OCI-LY7 (cell line): ENCODE measurements at regions of chr5 and their contacts with region 1.

Region 1: DNA sequence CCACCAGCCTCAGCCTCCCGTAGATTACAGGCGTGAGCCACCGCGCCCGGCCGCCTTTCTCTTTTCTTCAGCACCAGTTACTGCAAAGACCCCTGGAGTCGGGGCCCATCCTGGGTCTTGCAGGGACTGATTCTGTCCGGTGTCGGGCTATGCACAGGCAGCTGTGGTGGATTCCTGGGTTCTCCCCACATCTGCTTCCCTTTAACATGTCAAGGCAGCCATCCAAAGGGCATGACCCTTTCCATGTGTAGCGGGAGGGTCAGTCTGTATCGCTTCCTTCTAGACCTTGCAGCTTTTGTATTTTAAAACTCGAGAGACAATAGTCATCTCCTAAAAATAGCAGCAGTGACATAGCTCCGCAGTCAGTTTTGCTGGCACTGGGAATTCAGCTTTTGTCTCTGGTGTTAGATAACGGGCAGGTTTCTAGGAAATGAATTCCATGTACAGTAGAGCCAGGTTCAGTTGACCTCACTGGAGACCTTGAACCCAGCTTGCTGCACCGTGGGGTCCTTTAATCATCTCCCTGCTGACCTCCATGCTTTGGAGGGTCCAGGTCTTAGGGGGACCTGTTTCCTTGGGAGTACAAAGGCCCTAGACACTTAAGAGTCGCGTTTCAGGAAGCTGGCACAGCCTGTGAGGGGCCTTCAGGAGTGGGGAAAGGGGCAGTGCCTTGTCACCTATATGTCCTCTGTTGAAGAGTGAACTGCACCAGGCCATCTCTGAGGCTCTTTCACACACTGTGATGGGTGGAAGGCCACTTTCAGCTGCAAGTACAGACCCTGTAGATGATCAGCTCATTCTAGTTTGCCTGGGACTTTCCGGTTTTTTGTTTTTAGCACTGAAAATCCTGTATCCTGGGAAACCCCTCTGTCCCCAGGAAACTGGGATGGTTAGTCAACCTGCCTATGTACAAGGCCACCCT is 13.8 kb downstream of the ANKRD33B start:
- DNase-seq: no peak
- H3K4me3 ChIP-seq: no peak overlapping the region
- H3K27ac ChIP-seq: peak overlapping the region; percentile 61
- H3K4me1 ChIP-seq: peaks cover 71% of the 10 kb centered on the region
- CTCF ChIP-seq: no peak

Region 2: DNA sequence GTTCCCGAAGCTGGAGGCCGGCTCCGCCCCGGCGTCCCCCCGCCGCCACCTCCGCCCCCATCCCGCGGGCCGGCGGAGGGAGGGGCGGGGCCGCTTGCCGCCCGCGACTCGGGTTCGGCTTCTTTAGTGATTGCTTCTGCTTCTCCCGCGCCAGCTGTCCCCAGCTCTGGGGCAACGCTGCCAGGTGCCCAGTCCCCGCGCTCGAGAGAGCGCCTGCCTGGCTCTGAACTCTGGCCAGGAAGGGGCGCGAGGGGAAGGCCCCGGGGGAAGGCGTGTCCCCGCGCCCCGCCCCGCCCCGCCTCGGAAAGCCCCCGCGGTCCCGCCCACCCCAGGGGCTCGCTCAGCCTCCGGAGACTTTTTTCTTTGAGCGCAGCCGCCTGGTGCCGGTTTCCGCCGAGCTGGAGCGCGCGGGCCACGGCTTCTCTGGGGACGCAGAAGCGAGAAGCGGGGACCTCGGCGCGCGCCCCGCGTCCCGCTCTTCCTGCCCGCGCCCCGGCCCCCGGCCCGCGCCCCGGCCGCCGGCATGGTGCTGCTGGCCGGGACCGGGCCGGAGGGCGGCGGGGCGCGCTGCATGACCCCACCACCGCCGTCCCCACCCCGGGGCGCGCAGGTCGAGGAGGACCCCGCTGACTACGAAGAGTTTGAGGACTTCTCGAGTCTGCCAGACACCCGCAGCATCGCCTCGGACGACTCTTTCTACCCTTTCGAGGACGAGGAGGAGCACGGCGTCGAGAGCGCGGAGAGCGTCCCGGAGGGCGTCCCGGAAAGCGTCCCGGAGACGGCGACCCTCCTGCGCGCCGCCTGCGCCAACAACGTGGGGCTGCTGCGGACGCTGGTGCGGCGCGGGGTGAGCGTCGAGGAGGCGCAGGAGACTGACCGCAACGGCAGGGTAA is 13.4 kb before region 1 on chr5 and contains the start of gene ANKRD33B:
- CTCF ChIA-PET with region 1: interaction called, 3 read pairs
- POLR2A ChIA-PET with region 1: interaction called, 13 read pairs
- intact Hi-C with region 1: no loop called
- DNase-seq: peak; percentile 91
- H3K4me3 ChIP-seq: peak within 1 kb of the TSS; percentile 78
- H3K27ac ChIP-seq: peak within 1 kb of the TSS; percentile 20
- H3K4me1 ChIP-seq: peaks cover 50% of the 10 kb centered on the region
- CTCF ChIP-seq: no peak
- total RNA-seq, gene ANKRD33B: 5.6 TPM in 2 replicates